OCI-LY7 (cell line): ENCODE measurements at regions of chr2 and their contacts with region 1.

Region 1: DNA sequence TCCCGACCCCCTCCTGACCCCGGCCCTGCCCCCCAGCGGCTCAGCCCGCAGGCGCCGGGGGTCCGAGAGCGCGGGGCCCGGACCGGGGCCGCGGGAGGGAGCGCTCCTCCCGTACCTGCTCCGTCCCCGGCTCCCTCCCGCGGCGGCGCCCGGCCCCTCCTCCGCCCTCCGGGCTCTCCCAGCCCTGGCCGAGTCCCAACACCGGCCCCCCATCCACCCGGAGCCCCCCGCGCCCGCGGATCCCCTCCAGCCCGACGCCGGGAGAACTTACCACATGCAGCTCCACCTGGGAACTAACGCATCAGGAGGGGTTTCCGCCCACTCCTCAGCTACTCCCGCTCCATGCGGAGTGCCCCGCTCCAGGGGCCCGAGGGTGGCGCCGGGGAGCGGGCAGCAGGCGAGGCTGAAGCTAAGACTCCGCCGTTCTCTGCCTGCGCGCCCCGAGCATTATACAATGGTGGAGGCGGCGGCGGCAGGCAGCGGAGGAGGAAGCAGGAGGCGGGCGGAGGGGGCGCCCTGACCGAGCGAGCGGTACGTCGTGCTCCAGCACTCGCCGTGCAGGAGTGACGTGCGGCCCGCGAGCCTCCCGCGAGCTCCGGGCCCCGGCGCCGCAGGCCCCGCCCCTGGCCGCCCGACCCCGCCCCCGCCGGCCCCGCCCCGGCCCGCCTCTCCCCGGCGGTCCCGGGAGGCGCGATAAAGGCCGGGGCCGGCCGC is at the start of gene SERTAD2:
- DNase-seq: peak; percentile 95
- H3K4me3 ChIP-seq: peak within 1 kb of the TSS; percentile 93
- H3K27ac ChIP-seq: peak within 1 kb of the TSS; percentile 95
- H3K4me1 ChIP-seq: peaks cover 74% of the 10 kb centered on the region
- CTCF ChIP-seq: peak; percentile 49
- total RNA-seq, gene SERTAD2: 10.7 and 11.5 TPM in 2 replicates

Region 2: DNA sequence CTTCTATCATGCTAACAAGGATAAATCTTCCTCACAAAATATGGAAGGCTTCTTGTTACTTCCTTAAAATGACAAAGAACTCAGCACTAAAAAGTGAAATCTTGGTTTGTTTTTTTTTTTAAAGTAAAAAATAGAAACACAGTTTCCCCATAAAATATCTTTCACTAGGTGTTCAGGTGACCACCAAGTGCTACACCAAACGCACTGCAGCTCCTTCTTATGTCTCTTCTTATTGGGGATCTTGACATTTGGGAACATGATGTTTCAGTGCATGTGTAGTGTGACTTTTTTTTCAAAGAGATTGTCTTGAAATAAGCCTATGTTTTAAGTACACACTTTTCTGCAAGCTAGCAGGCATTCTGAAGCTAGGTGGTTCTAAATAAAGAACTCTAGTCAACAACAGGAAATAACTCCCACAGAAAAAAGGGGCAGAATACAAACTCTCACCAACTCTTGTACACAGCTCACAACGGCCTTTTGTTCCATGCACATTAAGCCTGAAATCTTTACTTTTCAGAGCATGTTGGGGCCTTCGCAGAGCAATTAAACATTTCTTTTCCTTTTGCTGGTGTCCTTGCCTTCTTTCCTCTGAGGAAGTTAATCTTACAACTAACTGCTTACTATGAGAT is 13.4 kb after region 1 on chr2:
- CTCF ChIA-PET with region 1: interaction called, 3 read pairs
- POLR2A ChIA-PET with region 1: interaction called, 146 read pairs
- intact Hi-C with region 1: no loop called
- DNase-seq: peak; percentile 79
- H3K4me3 ChIP-seq: peak overlapping the region; percentile 45
- H3K27ac ChIP-seq: peak overlapping the region; percentile 95
- H3K4me1 ChIP-seq: peaks cover 77% of the 10 kb centered on the region
- CTCF ChIP-seq: no peak

Region 3: GRCh38 chr2:64675860-64676259 is 22.4 kb after region 1 on chr2:
- CTCF ChIA-PET with region 1: no interaction called
- POLR2A ChIA-PET with region 1: interaction called, 101 read pairs
- intact Hi-C with region 1: no loop called
- DNase-seq: no peak
- H3K4me3 ChIP-seq: no peak overlapping the region
- H3K27ac ChIP-seq: no peak overlapping the region
- H3K4me1 ChIP-seq: peaks cover 9% of the 10 kb centered on the region
- CTCF ChIP-seq: no peak

Region 4: GRCh38 chr2:64998658-64999061 is 345.2 kb after region 1 on chr2:
- CTCF ChIA-PET with region 1: no interaction called
- POLR2A ChIA-PET with region 1: no interaction called
- intact Hi-C with region 1: no loop called
- DNase-seq: no peak
- H3K4me3 ChIP-seq: no peak overlapping the region
- H3K27ac ChIP-seq: no peak overlapping the region
- H3K4me1 ChIP-seq: no peaks in the 10 kb centered on the region
- CTCF ChIP-seq: no peak